ENCODE measurements at regions of chr7 and their contacts with region 1.

Region 1: GRCh38 chr7:39580149-39580874 is 14.1 kb downstream of the YAE1 start:
- DNase-seq: peak; percentile 76
- H3K4me3 ChIP-seq: no peak overlapping the region
- H3K27ac ChIP-seq: no peak overlapping the region
- H3K4me1 ChIP-seq: no peaks in the 10 kb centered on the region
- H3K27me3 ChIP-seq: no peaks in the 10 kb centered on the region
- CTCF ChIP-seq: peak; percentile 80 to 81

Region 2: GRCh38 chr7:39703144-39703543 is 122.8 kb after region 1 on chr7:
- CTCF ChIA-PET with region 1: no interaction called
- dilution Hi-C with region 1: no loop called
- in situ Hi-C with region 1: no loop called
- intact Hi-C with region 1: loop called (anchors 5 kb)
- DNase-seq: no peak
- H3K4me3 ChIP-seq: no peak overlapping the region
- H3K27ac ChIP-seq: no peak overlapping the region
- H3K4me1 ChIP-seq: peaks cover 19% of the 10 kb centered on the region
- H3K27me3 ChIP-seq: no peaks in the 10 kb centered on the region
- CTCF ChIP-seq: peak; percentile 20 to 39

Region 3: DNA sequence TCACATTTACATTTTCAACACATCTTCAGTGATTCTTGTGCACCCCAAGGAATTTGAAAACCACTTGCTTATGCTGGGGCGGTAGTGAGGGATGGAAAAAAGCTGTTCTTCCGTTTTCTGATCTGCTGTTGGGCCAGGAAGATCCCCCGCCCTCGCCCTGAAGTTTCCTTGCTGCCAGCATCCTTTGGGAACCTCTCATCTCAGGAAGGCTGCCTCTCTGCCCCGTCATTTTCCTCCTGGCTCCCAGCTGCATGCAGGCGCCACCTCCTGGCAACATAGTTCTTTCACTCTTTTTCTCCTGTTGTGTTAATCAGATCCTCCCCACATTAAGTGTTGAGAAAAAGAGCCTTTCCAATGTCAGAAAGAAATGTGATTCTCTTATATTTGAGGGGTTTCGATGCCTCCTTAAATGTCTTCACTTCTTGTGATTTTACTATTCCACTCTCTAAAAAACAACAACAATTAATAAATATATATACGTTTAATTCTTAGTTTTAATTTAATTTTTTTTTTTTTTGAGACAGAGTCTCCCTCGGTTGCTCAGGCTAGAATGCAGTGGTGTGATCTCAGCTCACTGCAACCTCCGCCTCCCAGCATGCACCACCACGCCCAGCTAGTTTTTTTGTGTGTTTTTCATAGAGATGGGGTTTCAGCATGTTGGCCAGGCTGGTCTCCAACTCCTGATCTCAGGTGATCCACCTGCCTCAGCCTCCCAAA is 165.9 kb after region 1 on chr7:
- CTCF ChIA-PET with region 1: interaction called, 8 read pairs
- dilution Hi-C with region 1: loop called (anchors 10 kb)
- in situ Hi-C with region 1: loop called (anchors 5 kb)
- intact Hi-C with region 1: loop called (anchors 1 kb)
- DNase-seq: peak; percentile 69
- H3K4me3 ChIP-seq: no peak overlapping the region
- H3K27ac ChIP-seq: peak overlapping the region; percentile 29
- H3K4me1 ChIP-seq: peaks cover 41% of the 10 kb centered on the region
- H3K27me3 ChIP-seq: no peaks in the 10 kb centered on the region
- CTCF ChIP-seq: peak; percentile 79 to 89

Region 4: GRCh38 chr7:39855325-39855674 is 275.0 kb after region 1 on chr7:
- CTCF ChIA-PET with region 1: interaction called, 8 read pairs
- dilution Hi-C with region 1: no loop called
- in situ Hi-C with region 1: no loop called
- intact Hi-C with region 1: loop called (anchors 10 kb)
- DNase-seq: no peak
- H3K4me3 ChIP-seq: peak overlapping the region in 2 of 3 experiments; percentile 35 to 41
- H3K27ac ChIP-seq: no peak overlapping the region
- H3K4me1 ChIP-seq: peaks cover 8% of the 10 kb centered on the region
- H3K27me3 ChIP-seq: no peaks in the 10 kb centered on the region
- CTCF ChIP-seq: no peak

Region 5: DNA sequence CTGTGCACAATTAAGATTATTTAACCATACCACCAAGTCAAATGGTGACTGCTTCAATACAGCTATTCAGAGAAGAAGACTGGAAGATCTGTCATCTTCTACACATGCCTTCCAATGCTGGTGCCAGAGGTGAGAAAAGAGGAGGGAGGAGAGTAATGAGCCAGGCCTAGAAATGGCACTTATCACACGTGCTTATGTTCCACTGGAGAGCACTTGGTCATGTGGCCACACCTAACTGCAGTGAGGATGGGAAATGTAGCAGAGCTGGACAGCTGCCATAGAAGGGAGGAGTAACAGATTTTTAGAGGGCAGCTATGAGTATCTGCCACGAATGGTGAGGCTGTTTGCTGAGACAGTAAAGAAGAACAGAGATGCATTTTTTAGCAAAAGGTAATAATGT is 477.0 kb after region 1 on chr7:
- CTCF ChIA-PET with region 1: no interaction called
- dilution Hi-C with region 1: no loop called
- in situ Hi-C with region 1: no loop called
- intact Hi-C with region 1: loop called (anchors 1 kb)
- DNase-seq: peak; percentile 11
- H3K4me3 ChIP-seq: no peak overlapping the region
- H3K27ac ChIP-seq: no peak overlapping the region
- H3K4me1 ChIP-seq: no peaks in the 10 kb centered on the region
- H3K27me3 ChIP-seq: no peaks in the 10 kb centered on the region
- CTCF ChIP-seq: no peak